H1 (cell line): ENCODE measurements at regions of chr2 and their contacts with region 1.

Region 1: DNA sequence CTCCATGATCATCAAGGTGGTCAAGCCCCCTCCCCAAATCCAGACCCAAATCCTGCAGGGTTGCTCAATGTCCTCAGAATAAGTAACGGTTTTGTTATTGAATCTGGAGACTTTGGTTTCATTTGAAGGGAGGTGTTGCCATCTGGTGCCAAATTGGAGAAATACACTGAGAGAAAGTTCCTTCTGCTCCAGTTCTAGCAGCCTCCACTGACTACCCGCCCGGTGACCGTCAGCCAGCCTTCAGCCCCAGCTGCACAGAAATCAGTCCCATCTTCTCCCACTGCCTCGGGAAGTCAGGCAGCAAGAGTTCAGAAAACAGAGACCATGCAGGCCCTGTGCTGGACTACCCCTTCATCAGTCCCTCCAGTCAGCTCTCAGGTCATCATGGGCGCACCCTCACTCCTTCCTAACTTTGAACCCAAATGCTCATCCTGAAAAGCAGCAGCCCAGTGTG is 38.7 kb downstream of the PKDCC start:
- DNase-seq: peak in 1 of 2 experiments; percentile 65
- H3K4me3 ChIP-seq: no peak overlapping the region
- H3K27ac ChIP-seq: no peak overlapping the region
- H3K4me1 ChIP-seq: peaks cover 0 to 6% (median under 1%) of the 10 kb centered on the region in 4 experiments; a peak in 3 of 7 replicates
- H3K27me3 ChIP-seq: peaks cover 0 to 5% (median 0%) of the 10 kb centered on the region in 4 experiments; a peak in 4 of 7 replicates
- CTCF ChIP-seq: peak; percentile 26 to 90 (median 75)
- EP300 ChIP-seq: no peak
- POLR2A ChIP-seq: no peak
- RAD21 ChIP-seq: peak; percentile 98 to 99

Region 2: DNA sequence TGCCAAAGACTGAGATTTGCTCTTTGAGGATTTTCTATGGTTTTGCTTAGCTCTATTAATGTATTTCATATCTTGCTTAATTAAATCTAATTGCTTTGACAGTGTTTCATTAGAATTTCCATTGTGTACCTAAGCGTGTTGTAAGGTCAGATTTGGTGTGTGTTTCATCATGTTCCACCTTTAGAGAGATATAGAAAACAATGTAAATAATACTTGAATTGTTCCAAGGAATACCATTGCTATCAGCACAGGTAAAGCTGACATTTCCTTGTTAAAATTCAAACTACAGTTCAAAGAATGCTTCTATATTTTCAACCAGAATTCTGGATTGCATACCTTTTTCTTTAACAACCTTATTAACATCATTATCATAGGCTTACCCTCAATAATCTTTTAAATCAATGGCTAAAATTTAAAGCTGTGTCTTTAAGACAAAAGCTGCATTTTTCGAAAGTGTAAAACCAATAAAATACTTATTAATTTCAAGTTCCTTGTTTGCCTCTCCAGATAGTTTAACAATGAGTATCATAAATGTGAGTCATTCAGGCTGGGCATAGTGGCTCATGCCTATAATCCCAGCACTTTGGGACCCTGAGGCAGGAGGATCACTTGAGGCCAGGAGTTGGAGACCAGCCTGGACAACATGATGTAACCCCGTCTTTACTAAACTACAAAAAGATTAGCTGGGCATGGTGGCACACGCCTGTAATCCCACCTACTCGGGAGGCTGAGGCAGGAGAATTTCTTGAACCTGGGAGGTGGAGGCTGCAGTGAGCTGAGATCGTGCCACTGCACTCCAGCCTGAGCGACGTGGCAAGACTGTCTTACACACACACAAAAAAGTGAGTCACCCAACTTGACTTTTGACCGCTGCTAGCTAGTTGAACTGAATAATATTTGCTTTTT is 226.7 kb before region 1 on chr2:
- CTCF ChIA-PET with region 1: interaction called, 890 read pairs
- POLR2A ChIA-PET with region 1: no interaction called
- DNase-seq: no peak
- H3K4me3 ChIP-seq: no peak overlapping the region
- H3K27ac ChIP-seq: no peak overlapping the region
- H3K4me1 ChIP-seq: peaks cover 1 to 4% (median 3%) of the 10 kb centered on the region in 4 experiments; a peak in 5 of 7 replicates
- H3K27me3 ChIP-seq: no peaks in the 10 kb centered on the region
- CTCF ChIP-seq: no peak
- EP300 ChIP-seq: no peak
- POLR2A ChIP-seq: no peak
- RAD21 ChIP-seq: no peak

Region 3: GRCh38 chr2:41937464-41937906 is 149.0 kb before region 1 on chr2:
- CTCF ChIA-PET with region 1: interaction called, 13 read pairs
- POLR2A ChIA-PET with region 1: no interaction called
- DNase-seq: peak in 1 of 2 experiments; percentile 58
- H3K4me3 ChIP-seq: peak overlapping the region in 1 of 4 experiments; percentile 23; a peak in 1 of 8 replicates
- H3K27ac ChIP-seq: peak overlapping the region; percentile 27; the same call in 1 of the 2 replicates
- H3K4me1 ChIP-seq: peaks cover 10 to 33% (median 26%) of the 10 kb centered on the region in 4 experiments
- H3K27me3 ChIP-seq: no peaks in the 10 kb centered on the region; a peak in 1 of 7 replicates
- CTCF ChIP-seq: peak in 2 of 3 experiments; percentile 4 to 19; a peak in 2 of 4 replicates
- EP300 ChIP-seq: no peak
- POLR2A ChIP-seq: no peak
- RAD21 ChIP-seq: peak; percentile 7 to 28; a peak in 3 of 4 replicates

Region 4: GRCh38 chr2:42040643-42041278 is 45.8 kb before region 1 on chr2:
- CTCF ChIA-PET with region 1: interaction called, 33 read pairs
- POLR2A ChIA-PET with region 1: no interaction called
- DNase-seq: no peak
- H3K4me3 ChIP-seq: no peak overlapping the region
- H3K27ac ChIP-seq: no peak overlapping the region
- H3K4me1 ChIP-seq: peaks cover 4 to 9% (median 8%) of the 10 kb centered on the region in 4 experiments; a peak in 5 of 7 replicates
- H3K27me3 ChIP-seq: no peaks in the 10 kb centered on the region
- CTCF ChIP-seq: peak; percentile 22 to 52 (median 49)
- EP300 ChIP-seq: no peak
- POLR2A ChIP-seq: no peak
- RAD21 ChIP-seq: peak; percentile 38 to 63; a peak in 3 of 4 replicates

Region 5: GRCh38 chr2:42060718-42061619 is 25.6 kb before region 1 on chr2:
- CTCF ChIA-PET with region 1: interaction called, 61 read pairs
- POLR2A ChIA-PET with region 1: no interaction called
- DNase-seq: no peak
- H3K4me3 ChIP-seq: no peak overlapping the region
- H3K27ac ChIP-seq: no peak overlapping the region; the same call in 1 of the 2 replicates
- H3K4me1 ChIP-seq: peaks cover 0 to 2% (median 0%) of the 10 kb centered on the region in 4 experiments; a peak in 2 of 7 replicates
- H3K27me3 ChIP-seq: no peaks in the 10 kb centered on the region; a peak in 1 of 7 replicates
- CTCF ChIP-seq: no peak
- EP300 ChIP-seq: no peak
- POLR2A ChIP-seq: no peak
- RAD21 ChIP-seq: no peak

Region 6: GRCh38 chr2:42156721-42157120 is 70.2 kb after region 1 on chr2:
- CTCF ChIA-PET with region 1: no interaction called
- POLR2A ChIA-PET with region 1: no interaction called
- DNase-seq: no peak
- H3K4me3 ChIP-seq: no peak overlapping the region
- H3K27ac ChIP-seq: no peak overlapping the region
- H3K4me1 ChIP-seq: peaks cover 0 to 5% (median 2%) of the 10 kb centered on the region in 4 experiments; a peak in 2 of 7 replicates
- H3K27me3 ChIP-seq: no peaks in the 10 kb centered on the region
- CTCF ChIP-seq: no peak
- EP300 ChIP-seq: no peak
- POLR2A ChIP-seq: no peak
- RAD21 ChIP-seq: no peak

Region 7: GRCh38 chr2:42238644-42239288 is 152.2 kb after region 1 on chr2:
- CTCF ChIA-PET with region 1: interaction called, 34 read pairs
- POLR2A ChIA-PET with region 1: no interaction called
- DNase-seq: peak; percentile 23 to 63
- H3K4me3 ChIP-seq: no peak overlapping the region
- H3K27ac ChIP-seq: no peak overlapping the region
- H3K4me1 ChIP-seq: peaks cover 0 to 6% (median 1%) of the 10 kb centered on the region in 4 experiments; a peak in 2 of 7 replicates
- H3K27me3 ChIP-seq: no peaks in the 10 kb centered on the region
- CTCF ChIP-seq: peak; percentile 61 to 75 (median 68)
- EP300 ChIP-seq: no peak
- POLR2A ChIP-seq: no peak
- RAD21 ChIP-seq: peak; percentile 83 to 85